Gastrocnemius medialis (tissue), 4 donors: ENCODE measurements at regions of chr18 and their contacts with region 1.

Region 1: DNA sequence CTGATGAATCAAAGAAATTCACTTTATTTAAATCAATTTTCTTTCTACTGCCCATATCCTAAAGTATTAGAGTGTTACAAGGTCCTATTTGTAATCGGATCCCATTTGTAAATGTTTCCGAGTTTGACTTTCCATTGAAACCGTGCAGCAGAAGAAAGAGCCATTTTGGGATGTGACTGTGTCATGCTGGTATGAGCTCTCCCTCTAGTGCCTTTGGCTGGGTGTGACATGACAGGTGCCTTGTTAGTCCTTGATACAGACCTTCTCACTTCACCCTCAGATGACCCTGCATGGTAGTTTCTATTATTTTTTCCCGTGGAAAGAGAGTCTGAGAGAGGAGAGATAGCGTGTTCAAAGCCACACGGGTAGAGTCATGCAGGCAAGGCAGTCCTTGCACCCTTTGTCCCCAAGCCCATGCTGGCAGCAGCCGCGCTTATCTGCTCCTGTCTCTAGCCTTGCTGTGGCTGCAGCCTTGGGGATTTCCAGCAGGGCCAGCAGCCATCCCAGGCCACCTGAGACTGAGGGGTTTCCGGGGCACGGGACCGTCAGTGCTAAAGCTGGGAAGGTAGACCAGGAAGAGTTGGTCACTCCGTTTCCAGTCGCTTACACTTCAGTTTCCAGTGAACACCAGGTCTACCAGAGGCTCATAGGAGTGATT is 21.4 kb downstream of the CHMP1B start:
- DNase-seq: peak; percentile 55 to 77
- ATAC-seq: peak; percentile 99 to 100
- H3K4me3 ChIP-seq: no peak overlapping the region
- H3K27ac ChIP-seq: peak overlapping the region; percentile 53 to 73 (median 62)
- H3K4me1 ChIP-seq: peaks cover 7 to 8% of the 10 kb centered on the region in 2 donors
- H3K27me3 ChIP-seq: no peaks in the 10 kb centered on the region
- CTCF ChIP-seq: peak; percentile 63 to 74 (median 70)
- POLR2A ChIP-seq: no peak

Region 2: DNA sequence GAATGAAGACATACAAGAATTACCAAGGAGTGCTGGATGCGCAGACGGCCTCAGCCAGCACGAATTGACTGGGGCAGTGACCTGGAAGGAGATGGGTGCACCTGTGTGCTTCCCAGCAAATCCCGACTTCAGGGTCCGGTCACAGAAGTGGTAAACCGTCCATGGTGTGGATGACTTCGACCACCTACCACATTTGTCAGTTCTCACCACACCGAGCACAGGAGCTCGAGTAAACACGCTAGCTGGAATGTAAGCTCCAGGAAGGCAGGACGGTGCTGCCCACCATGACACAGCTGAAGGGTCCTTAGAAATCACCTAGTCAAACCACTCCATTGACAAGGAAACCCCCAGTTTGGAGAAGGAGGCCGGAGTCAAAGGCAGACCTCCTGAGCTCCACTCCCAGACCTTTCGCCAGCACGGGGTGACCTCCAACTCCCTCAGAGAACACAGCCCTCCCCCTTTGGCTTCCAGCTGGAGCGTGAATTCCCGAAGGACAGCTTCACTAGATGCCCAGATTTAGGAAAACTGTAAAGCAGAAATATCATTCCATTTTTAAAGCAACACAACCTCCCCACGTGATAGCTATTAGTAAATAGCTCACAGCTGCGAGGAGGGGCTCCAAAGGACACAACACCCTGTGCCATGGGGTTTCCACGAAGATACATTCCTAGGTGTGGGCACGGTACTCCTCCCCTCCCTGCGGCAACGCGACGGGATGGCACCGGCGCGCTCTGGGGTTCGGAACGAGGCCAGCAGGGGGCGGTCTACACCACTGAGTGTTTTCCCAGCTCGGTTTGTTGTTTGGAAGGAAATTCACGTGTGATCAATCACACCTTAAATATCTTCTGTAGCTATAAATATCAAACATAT is 217.6 kb before region 1 on chr18:
- in situ Hi-C with region 1: no loop called
- intact Hi-C with region 1: loop called (anchors 1 kb)
- DNase-seq: peak in 1 of 2 donors; percentile 20
- ATAC-seq: no peak
- H3K4me3 ChIP-seq: peak overlapping the region in 1 of 4 donors; percentile 7
- H3K27ac ChIP-seq: no peak overlapping the region
- H3K4me1 ChIP-seq: peaks cover 0 to 4% of the 10 kb centered on the region in 2 donors
- H3K27me3 ChIP-seq: peaks cover 0 to 1% (median 0%) of the 10 kb centered on the region in 3 donors
- CTCF ChIP-seq: peak; percentile 40 to 71 (median 56)
- POLR2A ChIP-seq: no peak

Region 3: GRCh38 chr18:11733031-11733430 is 139.6 kb before region 1 on chr18:
- in situ Hi-C with region 1: loop called (anchors 5 to 10 kb)
- intact Hi-C with region 1: loop called (anchors 1 kb)
- DNase-seq: peak; percentile 44 to 75
- ATAC-seq: peak; percentile 80 to 98
- H3K4me3 ChIP-seq: peak overlapping the region; percentile 0 to 48 (median 28)
- H3K27ac ChIP-seq: no peak overlapping the region
- H3K4me1 ChIP-seq: no peaks in the 10 kb centered on the region
- H3K27me3 ChIP-seq: peaks cover 0 to 5% (median 0%) of the 10 kb centered on the region in 3 donors
- CTCF ChIP-seq: peak; percentile 86 to 93 (median 90)
- POLR2A ChIP-seq: no peak

Region 4: DNA sequence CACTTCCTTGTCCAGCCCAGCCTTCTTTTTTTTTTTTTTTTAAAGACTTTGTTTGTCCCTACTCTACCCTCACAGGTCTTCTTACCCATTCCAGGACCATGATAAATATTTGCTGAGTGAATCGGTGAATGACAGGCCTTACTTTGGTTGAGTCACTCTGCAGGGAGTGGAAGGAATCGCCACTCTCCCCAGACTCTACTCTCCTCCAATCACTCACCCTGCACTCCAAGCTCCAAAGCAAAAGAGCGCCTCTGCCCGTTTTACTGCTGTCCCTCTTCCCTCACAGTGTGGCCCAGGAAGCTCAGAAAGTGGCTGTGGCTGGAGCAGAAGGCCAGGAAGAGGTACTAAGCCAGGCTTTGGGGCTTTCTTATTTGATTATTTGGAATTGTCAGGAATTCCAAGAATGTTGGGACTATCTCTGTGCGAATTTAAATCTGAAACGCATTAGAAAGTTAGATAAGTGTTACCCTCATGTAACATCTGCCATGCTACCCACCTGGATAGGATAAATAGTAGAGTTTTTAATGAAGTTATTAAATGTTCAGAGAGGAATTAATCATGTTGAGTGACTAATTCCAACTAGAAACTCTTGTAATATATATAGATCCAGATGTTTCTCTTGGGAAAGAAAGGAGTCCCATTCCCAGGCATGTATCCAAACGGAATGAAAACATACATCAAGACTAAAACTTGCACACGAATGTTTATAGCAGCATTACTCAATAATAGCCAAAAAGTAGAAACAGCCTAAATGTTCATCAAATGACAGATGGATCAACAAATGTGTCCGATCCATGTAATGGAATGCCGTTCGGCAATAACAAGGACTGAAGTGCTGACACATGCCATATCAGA is 64.4 kb before region 1 on chr18:
- in situ Hi-C with region 1: no loop called
- intact Hi-C with region 1: loop called (anchors 5 kb)
- DNase-seq: no peak
- ATAC-seq: no peak
- H3K4me3 ChIP-seq: no peak overlapping the region
- H3K27ac ChIP-seq: no peak overlapping the region
- H3K4me1 ChIP-seq: peaks cover 0 to 5% of the 10 kb centered on the region in 2 donors
- H3K27me3 ChIP-seq: no peaks in the 10 kb centered on the region
- CTCF ChIP-seq: no peak
- POLR2A ChIP-seq: no peak

Region 5: GRCh38 chr18:11826836-11827235 is 45.8 kb before region 1 on chr18:
- in situ Hi-C with region 1: no loop called
- intact Hi-C with region 1: loop called (anchors 5 kb)
- DNase-seq: no peak
- ATAC-seq: no peak
- H3K4me3 ChIP-seq: no peak overlapping the region
- H3K27ac ChIP-seq: no peak overlapping the region
- H3K4me1 ChIP-seq: no peaks in the 10 kb centered on the region
- H3K27me3 ChIP-seq: no peaks in the 10 kb centered on the region
- CTCF ChIP-seq: no peak
- POLR2A ChIP-seq: no peak